Activated T-helper 2 cell treated with anti-CD3 and anti-CD28 coated beads, Interferon-gamma antibody, Interleukin-2, Interleukin-4, amounts not matched to agents 10 μg/mL and 5 μg/mL and 100 μg/mL, durations not matched to agents 14 hours and 24 hours and 36 hours (primary cell): ENCODE measurements at regions of chr2 and their contacts with region 1.

Region 1: DNA sequence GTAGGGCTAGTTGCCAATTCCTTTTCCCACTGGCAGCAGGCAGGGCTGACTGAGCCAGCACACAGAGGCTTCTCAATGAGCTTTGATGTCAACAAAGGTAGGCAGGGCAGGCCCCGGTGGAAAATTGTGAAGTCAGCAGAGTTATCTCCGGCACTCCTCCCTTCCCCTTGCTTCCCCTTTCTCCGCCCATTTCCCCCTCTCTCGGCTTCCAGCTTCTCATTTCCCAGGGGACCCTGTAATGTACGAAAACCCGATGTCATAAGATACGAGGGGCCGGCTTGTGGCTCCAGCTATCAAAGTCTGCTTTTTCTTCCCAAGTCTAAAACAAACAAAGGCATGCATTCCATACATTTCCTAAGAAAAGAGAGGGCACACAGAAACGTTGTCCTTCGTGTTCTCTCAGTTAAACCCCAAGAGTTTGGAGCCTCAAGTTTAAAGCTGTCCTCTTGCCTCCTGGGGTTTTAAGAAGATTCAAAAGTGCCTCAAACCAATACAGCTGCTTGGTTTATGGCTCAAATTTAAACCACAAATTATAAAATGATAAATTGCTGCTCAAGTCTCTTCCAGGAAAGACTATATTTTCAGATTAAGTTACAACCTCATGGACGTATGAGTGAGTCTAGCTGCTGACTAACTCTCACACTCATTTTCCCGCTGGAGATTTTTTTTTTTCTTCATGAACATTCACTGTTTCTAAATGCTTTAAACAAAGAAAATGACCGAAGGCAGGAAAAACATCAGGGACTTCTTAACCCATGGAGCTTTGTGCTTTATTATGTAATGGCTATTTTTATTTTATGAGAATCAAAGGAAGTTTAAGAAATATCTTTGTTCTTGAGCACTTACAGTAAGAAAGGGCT is 27.2 kb upstream of the EML4 start:
- DNase-seq: no peak
- H3K4me3 Mint-ChIP-seq: no peak overlapping the region
- H3K27ac Mint-ChIP-seq: peak overlapping the region; percentile 24
- H3K4me1 Mint-ChIP-seq: peaks cover 38% of the 10 kb centered on the region
- H3K27me3 Mint-ChIP-seq: peaks cover 5% of the 10 kb centered on the region

Region 2: GRCh38 chr2:41779892-41780291 is 362.0 kb before region 1 on chr2:
- intact Hi-C with region 1: no loop called
- DNase-seq: no peak
- H3K4me3 Mint-ChIP-seq: no peak overlapping the region
- H3K27ac Mint-ChIP-seq: no peak overlapping the region
- H3K4me1 Mint-ChIP-seq: no peaks in the 10 kb centered on the region
- H3K27me3 Mint-ChIP-seq: peaks cover 2% of the 10 kb centered on the region

Region 3: DNA sequence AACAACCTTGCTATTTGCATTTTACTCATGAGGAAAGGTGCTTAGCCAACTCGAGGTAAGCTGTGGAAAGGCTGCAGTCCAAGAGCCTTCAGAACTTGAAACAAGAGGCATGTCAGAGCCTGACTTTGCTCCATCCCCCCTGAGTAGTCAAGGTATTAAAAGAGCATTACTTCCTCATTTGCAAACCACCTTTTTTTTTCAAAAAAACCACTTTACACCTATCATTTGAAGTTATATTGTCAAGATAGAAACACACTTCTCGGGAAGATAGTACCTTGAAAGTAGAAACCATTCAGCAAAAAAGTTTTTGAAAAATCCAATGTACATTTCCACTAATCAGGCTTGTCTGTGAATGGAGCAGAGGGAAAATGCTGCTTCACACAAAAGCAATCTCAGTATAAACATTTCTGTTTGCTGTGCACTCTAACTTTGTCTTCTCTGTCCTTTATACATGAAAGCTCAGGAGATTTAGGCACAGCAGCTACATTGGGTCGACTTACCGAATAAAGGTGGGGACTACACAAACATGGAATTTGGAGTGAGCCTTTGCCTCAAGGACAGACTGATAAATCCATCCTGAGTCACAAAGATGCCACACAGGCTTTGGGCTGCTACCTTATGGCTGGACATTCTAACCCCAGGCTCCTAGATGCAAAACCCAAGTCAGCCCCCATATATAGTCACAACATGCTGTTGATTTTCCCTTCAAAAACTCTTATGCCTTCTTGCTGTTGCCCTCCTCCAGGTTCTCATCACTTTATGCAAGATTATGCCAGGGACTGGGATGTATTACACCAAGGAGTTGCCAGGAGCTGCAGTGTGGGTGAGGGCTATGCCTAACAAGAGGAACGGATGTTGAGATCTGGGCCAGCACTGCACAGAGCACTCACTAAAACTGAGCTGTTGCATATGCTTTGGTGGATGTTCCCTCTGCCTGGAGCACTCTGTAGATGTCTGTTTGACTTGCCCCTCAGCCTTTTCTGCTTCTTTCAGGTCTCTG is 14.2 kb before region 1 on chr2:
- intact Hi-C with region 1: loop called (anchors 2 kb)
- DNase-seq: no peak
- H3K4me3 Mint-ChIP-seq: no peak overlapping the region
- H3K27ac Mint-ChIP-seq: no peak overlapping the region
- H3K4me1 Mint-ChIP-seq: peaks cover 77% of the 10 kb centered on the region
- H3K27me3 Mint-ChIP-seq: no peaks in the 10 kb centered on the region